Activated CD4-positive, alpha-beta memory T cell treated with anti-CD3 and anti-CD28 coated beads for 36 hours (primary cell): ENCODE measurements at regions of chr13 and their contacts with region 1.

Region 1: GRCh38 chr13:25874907-25875306 is 176.9 kb downstream of the SHISA2 start:
- DNase-seq: peak; percentile 74
- H3K4me3 Mint-ChIP-seq: no peak overlapping the region
- H3K27ac Mint-ChIP-seq: peak overlapping the region; percentile 4
- H3K4me1 Mint-ChIP-seq: peaks cover 63% of the 10 kb centered on the region
- H3K27me3 Mint-ChIP-seq: no peaks in the 10 kb centered on the region

Region 2: DNA sequence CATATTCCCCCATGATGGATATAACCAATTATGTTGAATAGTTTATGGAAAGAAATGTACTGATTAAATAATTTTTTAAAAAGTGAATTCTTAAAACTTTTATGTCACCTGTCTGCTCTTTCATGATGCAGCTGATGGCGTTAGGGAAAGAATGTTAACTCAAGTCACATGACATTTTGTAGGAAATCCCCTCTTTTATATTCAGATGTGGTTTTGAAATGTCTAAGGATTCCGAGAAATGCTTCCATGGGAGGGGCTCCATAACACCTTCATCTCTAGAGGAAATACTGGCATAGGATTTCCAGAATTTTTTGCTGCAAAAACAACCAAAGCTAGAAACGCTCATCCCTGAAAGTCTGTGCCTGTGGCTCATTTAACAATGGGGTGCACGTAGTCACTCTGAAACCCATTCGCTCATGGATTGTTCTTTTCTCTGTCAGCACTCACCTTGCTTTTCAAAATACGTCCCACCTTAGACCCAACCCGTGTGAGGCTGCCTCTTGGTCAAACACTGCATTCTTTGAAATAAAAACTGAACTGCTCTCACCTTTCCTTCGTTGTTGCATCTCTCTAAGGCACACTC is 112.0 kb before region 1 on chr13:
- CTCF ChIA-PET with region 1: no interaction called
- POLR2A ChIA-PET with region 1: no interaction called
- intact Hi-C with region 1: loop called (anchors 2 kb)
- DNase-seq: peak; percentile 11
- H3K4me3 Mint-ChIP-seq: no peak overlapping the region
- H3K27ac Mint-ChIP-seq: no peak overlapping the region
- H3K4me1 Mint-ChIP-seq: peaks cover 17% of the 10 kb centered on the region
- H3K27me3 Mint-ChIP-seq: no peaks in the 10 kb centered on the region

Region 3: DNA sequence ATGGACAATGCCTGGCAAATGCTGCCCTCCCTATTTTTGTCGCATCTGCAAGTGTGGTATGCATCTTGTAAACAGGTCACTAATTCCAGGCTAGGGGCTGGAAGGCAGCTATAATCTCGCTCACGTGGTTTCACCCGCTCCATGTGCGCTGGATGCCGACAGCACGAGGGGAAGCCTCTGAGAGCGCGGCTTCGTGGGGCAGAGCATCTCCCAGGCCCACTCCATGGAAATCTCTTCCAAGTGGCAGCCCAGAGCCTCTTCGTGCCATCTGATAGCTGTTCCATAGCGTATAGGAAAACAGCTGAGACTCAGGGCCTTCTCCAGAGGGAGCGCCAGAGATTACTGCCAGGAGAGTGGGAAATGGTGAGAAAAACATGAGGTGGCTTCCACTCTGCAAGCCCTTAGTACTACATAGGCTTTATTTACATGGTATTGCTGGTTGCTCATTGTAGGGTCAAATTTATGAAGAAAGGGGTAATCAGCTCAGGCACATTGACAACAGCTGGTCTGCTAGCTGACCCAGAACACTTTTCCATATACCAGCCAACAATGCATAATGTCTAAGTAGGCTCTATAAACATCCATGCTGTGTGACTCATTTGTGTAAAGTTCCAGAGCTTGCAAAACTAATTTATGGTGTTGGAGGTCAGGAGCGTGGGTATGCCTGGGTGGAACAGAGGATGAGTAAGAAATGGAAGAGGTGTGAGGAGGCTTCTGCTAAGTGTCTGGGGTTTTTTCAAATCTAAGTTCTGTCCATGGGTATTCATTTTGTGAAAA is 11.7 kb after region 1 on chr13:
- CTCF ChIA-PET with region 1: interaction called, 3 read pairs
- POLR2A ChIA-PET with region 1: no interaction called
- intact Hi-C with region 1: loop called (anchors 1 kb)
- DNase-seq: peak; percentile 62
- H3K4me3 Mint-ChIP-seq: no peak overlapping the region
- H3K27ac Mint-ChIP-seq: no peak overlapping the region
- H3K4me1 Mint-ChIP-seq: peaks cover 51% of the 10 kb centered on the region
- H3K27me3 Mint-ChIP-seq: no peaks in the 10 kb centered on the region